ENCODE measurements at regions of chr1 and their contacts with region 1.

Region 1: DNA sequence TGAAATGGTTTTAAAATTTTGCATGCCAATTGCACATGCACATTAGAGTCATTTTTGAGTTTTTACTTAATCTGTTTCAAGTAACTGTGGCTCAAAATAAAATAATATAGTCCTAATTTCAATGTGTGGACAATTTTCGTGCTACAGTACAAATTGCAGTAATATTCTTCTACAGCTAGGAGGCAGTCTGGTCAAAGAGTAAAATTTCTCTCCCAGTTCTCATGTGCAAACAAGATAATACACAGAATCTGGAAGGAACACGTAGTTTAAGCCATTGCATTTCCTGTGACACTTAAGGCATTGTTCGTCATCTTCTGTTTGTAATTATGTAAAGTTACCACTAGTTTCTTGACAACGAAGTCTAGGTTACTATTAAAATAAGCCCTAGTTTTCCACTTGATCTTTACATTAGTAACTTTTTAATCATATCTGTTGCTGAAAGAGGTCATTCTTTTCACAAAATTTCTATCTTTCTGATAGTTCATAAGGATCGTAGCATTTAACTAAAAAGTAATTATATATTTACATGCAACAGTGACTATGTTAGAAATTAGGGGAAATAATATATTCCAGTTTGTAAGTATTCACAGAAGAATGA is 28.9 kb downstream of the ODR4 start:
- DNase-seq: peak; percentile 76
- ATAC-seq: peak; percentile 92
- H3K4me3 ChIP-seq: no peak overlapping the region
- H3K27ac ChIP-seq: no peak overlapping the region
- H3K4me1 ChIP-seq: no peaks in the 10 kb centered on the region; the same call in 1 of the 2 replicates
- H3K27me3 ChIP-seq: no peaks in the 10 kb centered on the region
- CTCF ChIP-seq: peak; percentile 80
- POLR2A ChIP-seq: no peak
- RAD21 ChIP-seq: peak; percentile 72

Region 2: GRCh38 chr1:186454981-186455380 is 50.4 kb after region 1 on chr1:
- CTCF ChIA-PET with region 1: no interaction called
- POLR2A ChIA-PET with region 1: no interaction called
- dilution Hi-C with region 1: no loop called
- in situ Hi-C with region 1: no loop called
- intact Hi-C with region 1: no loop called
- DNase-seq: no peak
- ATAC-seq: no peak
- H3K4me3 ChIP-seq: no peak overlapping the region
- H3K27ac ChIP-seq: no peak overlapping the region
- H3K4me1 ChIP-seq: no peaks in the 10 kb centered on the region
- H3K27me3 ChIP-seq: no peaks in the 10 kb centered on the region
- CTCF ChIP-seq: no peak
- POLR2A ChIP-seq: no peak
- RAD21 ChIP-seq: no peak

Region 3: GRCh38 chr1:186915555-186915954 is 511.0 kb after region 1 on chr1:
- CTCF ChIA-PET with region 1: no interaction called
- POLR2A ChIA-PET with region 1: no interaction called
- dilution Hi-C with region 1: no loop called
- in situ Hi-C with region 1: no loop called
- intact Hi-C with region 1: loop called (anchors 5 kb)
- DNase-seq: no peak
- ATAC-seq: no peak
- H3K4me3 ChIP-seq: no peak overlapping the region
- H3K27ac ChIP-seq: no peak overlapping the region
- H3K4me1 ChIP-seq: no peaks in the 10 kb centered on the region
- H3K27me3 ChIP-seq: no peaks in the 10 kb centered on the region
- CTCF ChIP-seq: 0 out of 2 replicates have a peak, but pooled peaks have one; percentile 18
- POLR2A ChIP-seq: no peak
- RAD21 ChIP-seq: peak; percentile 22; the same call in 1 of the 2 replicates

Measured in IMR-90 (cell line).